OCI-LY7 (cell line): ENCODE measurements at regions of chr12 and their contacts with region 1.

Region 1: DNA sequence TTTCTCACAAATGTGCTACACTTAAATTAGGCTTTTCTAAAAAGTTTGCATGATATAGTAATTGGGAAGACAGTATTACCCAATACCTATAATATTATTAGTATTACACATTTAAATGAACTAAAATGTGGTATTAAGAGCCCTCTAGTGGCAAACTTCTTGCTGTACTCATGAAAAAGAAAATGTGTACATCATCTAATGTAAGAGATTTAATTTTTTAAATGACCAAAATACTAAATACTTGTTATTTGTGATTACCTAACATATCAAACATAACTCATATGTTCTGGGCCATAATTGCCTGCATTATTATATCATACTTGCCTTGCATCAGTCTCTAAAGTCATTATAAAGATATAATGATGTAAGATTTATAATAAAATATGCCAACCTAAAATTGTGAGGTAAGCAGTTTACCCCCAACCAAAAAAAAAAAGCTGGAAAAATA is 64.2 kb downstream of the DNAI7 start:
- DNase-seq: peak; percentile 80
- H3K4me3 ChIP-seq: no peak overlapping the region
- H3K27ac ChIP-seq: no peak overlapping the region
- H3K4me1 ChIP-seq: peaks cover 14% of the 10 kb centered on the region
- CTCF ChIP-seq: peak; percentile 98

Region 2: DNA sequence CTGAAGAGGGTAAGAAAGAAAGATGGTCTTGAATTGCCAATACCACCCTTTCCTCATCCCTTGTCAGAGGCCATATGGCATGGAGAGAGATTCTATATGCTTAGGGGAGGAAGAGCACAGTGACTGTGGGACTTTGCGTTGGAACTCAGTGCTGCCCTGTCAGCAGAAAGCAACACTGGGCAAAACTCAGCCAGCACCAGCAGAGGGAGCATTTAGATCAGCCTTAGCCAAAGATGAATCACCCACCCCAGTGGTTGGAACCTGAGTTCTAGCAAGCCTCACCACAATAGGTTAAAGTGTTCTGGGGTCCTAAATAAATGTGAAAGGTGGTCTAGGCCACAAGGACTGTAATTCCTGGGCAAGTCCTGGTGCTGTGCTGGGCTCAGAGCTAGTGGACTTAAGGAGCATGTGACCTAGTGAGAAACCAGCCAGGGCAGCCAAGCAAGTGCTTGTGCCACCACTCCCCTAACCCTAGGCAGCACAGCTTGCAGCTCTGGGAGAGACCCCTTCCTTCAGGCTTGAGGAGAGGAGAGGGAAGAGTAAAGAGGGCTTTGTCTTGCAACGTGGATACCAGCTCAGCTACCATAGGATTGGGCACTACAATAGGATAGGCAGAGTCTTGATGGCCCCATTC is 170.4 kb before region 1 on chr12:
- CTCF ChIA-PET with region 1: interaction called, 4 read pairs
- POLR2A ChIA-PET with region 1: interaction called, 5 read pairs
- intact Hi-C with region 1: loop called (anchors 1 kb)
- DNase-seq: peak; percentile 72
- H3K4me3 ChIP-seq: no peak overlapping the region
- H3K27ac ChIP-seq: no peak overlapping the region
- H3K4me1 ChIP-seq: no peaks in the 10 kb centered on the region
- CTCF ChIP-seq: peak; percentile 91

Region 3: DNA sequence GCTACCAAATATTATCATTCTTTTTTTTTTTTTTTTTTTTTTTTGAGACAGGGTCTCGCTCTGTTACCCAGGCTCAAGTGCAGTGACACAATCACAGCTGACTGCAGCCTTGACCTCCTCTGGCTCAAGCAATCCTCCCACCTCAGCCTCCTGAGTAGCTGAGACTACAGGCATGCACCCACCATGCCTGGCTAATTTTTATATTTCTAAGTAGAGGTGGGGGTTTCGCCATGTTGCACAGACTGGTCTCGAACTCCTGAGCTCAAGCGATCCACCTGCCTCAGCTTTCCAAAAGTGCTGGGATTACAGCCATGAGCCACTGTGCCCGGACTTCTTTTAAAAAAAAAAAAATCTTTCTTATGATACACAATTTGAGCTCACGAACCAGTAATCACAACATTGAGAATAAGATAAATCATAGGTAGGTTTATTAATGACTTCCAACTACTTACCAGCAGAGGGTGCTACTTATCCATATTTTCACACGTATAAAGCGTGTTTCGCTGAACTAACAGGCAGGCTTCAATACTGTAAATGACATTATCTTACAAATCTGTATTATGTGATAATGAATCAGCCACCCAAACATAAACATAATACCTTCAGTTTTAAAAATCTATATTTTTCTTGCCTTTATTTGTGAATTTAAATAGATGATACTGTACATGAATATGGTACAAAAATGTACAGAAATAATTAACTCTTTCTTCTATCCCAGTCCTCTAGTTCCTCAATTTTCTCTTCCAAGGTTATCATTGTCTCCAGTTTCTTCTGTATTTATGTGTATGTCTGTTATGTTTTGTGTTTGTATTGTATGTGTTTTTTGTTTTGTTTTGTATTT is 139.3 kb before region 1 on chr12:
- CTCF ChIA-PET with region 1: interaction called, 4 read pairs
- POLR2A ChIA-PET with region 1: interaction called, 20 read pairs
- intact Hi-C with region 1: loop called (anchors 1 kb)
- DNase-seq: peak; percentile 90
- H3K4me3 ChIP-seq: no peak overlapping the region
- H3K27ac ChIP-seq: peak overlapping the region; percentile 73
- H3K4me1 ChIP-seq: peaks cover 58% of the 10 kb centered on the region
- CTCF ChIP-seq: peak; percentile 94

Region 4: DNA sequence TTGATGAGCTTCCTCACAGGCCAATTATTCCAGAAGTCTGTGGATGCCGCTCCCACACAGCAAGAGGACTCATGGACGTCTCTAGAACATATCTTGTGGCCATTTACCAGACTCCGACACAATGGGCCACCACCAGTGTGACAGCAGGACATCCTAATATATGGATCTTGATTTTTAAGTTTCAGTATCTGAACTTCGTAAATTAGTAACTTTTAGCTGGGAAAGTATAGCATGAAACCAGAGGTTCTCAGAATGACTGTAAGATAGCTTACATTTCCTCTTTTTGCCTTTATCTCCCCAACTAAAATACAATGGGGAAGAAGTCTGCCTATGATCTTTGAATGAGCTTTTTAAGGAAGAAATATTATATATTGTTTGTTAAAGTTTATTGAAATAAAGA is 22.8 kb before region 1 on chr12:
- CTCF ChIA-PET with region 1: no interaction called
- POLR2A ChIA-PET with region 1: no interaction called
- intact Hi-C with region 1: no loop called
- DNase-seq: no peak
- H3K4me3 ChIP-seq: no peak overlapping the region
- H3K27ac ChIP-seq: peak overlapping the region; percentile 8
- H3K4me1 ChIP-seq: no peaks in the 10 kb centered on the region
- CTCF ChIP-seq: no peak

Region 5: GRCh38 chr12:25146686-25147085 is 15.9 kb after region 1 on chr12:
- CTCF ChIA-PET with region 1: no interaction called
- POLR2A ChIA-PET with region 1: interaction called, 11 read pairs
- intact Hi-C with region 1: no loop called
- DNase-seq: no peak
- H3K4me3 ChIP-seq: no peak overlapping the region
- H3K27ac ChIP-seq: no peak overlapping the region
- H3K4me1 ChIP-seq: no peaks in the 10 kb centered on the region
- CTCF ChIP-seq: no peak